ENCODE measurements at regions of chr16 and their contacts with region 1.

Region 1: GRCh38 chr16:84340325-84341040 is 27.9 kb upstream of the ATP2C2 start:
- DNase-seq: peak in 1 of 2 donors; percentile 37
- ATAC-seq: no peak
- H3K4me3 ChIP-seq: no peak overlapping the region
- H3K27ac ChIP-seq: no peak overlapping the region
- H3K4me1 ChIP-seq: no peaks in the 10 kb centered on the region
- H3K27me3 ChIP-seq: peaks cover 0 to 2% (median 0%) of the 10 kb centered on the region in 3 donors
- CTCF ChIP-seq: no peak

Region 2: GRCh38 chr16:83971165-83972130 is 369.0 kb before region 1 on chr16:
- intact Hi-C with region 1: no loop called
- DNase-seq: no peak
- ATAC-seq: no peak
- H3K4me3 ChIP-seq: no peak overlapping the region
- H3K27ac ChIP-seq: no peak overlapping the region
- H3K4me1 ChIP-seq: no peaks in the 10 kb centered on the region
- H3K27me3 ChIP-seq: no peaks in the 10 kb centered on the region
- CTCF ChIP-seq: no peak

Region 3: GRCh38 chr16:84284154-84284722 is 56.2 kb before region 1 on chr16:
- intact Hi-C with region 1: no loop called
- DNase-seq: peak; percentile 54 to 76
- ATAC-seq: peak in 3 of 4 donors; percentile 38 to 70 (median 58)
- H3K4me3 ChIP-seq: no peak overlapping the region
- H3K27ac ChIP-seq: peak overlapping the region; percentile 21
- H3K4me1 ChIP-seq: no peaks in the 10 kb centered on the region
- H3K27me3 ChIP-seq: peaks cover 0 to 17% (median 3%) of the 10 kb centered on the region in 3 donors
- CTCF ChIP-seq: no peak

Region 4: DNA sequence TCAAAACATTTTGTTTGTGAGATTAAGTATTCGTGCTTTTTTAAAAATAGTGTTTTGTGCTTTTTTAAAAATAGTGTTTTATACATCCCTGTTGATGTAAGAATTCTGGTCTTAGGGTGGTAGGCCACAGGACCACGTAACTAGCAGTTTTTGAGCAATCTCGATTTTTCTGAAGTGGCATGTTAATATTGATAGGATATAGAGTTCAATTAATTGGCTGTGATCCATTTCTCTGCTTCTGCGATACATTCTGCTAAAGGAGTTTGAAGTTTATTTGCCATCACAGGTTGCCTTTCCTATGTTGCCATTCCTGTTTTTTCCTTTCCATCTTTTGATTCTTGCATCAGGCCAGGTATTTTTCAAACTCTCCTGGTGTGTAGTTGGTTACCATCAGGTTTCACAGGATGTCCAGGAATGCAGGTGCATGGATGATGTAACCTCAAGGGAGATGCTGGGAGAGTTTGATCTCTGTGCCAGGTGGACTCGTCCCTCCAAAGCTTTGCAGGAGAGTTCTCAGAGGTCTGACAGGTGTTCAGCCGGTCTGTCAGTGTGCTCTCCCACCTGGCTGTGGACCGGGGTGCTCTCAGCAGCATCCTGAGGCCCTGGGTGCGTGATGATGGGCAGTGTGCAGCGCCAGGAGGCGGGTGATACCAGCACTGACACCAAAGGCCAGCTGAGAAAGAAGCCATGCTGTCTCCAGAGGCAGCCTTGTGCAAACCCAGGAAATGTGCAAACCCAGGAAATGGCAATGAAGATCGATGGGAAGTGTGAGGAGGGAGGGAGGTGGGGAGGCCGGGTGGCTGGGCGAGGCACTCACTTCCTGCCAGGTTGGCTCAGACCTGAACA is 29.5 kb after region 1 on chr16:
- intact Hi-C with region 1: loop called in 1 of 2 experiments (anchors 2 kb)
- DNase-seq: no peak
- ATAC-seq: no peak
- H3K4me3 ChIP-seq: no peak overlapping the region
- H3K27ac ChIP-seq: no peak overlapping the region
- H3K4me1 ChIP-seq: no peaks in the 10 kb centered on the region
- H3K27me3 ChIP-seq: peaks cover 0 to 65% (median 15%) of the 10 kb centered on the region in 3 donors
- CTCF ChIP-seq: no peak

Region 5: DNA sequence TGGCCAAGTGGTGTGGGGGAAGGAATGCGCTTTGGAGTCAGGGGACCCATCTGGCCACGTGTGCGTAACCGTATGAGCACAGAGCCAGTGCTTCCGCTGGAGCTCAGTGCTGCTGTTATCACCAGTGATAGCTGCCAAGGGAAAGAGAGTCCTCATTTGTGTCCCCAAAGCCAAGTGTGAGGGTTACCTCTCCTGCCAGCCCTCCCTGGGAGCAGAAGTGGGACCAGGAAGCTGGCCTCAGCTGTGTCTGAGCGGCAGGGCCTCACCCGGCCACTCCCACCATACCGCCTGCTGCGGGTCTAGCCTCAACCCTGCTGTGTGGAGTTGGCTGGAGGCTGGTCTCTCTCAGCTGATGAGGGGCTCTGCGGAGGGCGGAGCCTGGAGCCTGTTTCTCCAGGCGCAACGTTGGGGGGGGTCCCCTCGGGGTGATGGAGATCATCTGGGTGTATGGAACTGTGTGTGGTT is 119.5 kb after region 1 on chr16:
- intact Hi-C with region 1: no loop called
- DNase-seq: no peak
- ATAC-seq: no peak
- H3K4me3 ChIP-seq: no peak overlapping the region
- H3K27ac ChIP-seq: no peak overlapping the region
- H3K4me1 ChIP-seq: no peaks in the 10 kb centered on the region
- H3K27me3 ChIP-seq: no peaks in the 10 kb centered on the region
- CTCF ChIP-seq: no peak

Region 6: GRCh38 chr16:84884596-84885341 is 544.3 kb after region 1 on chr16:
- intact Hi-C with region 1: no loop called
- DNase-seq: peak in 1 of 2 donors; percentile 53
- ATAC-seq: peak in 1 of 4 donors; percentile 22
- H3K4me3 ChIP-seq: no peak overlapping the region
- H3K27ac ChIP-seq: no peak overlapping the region
- H3K4me1 ChIP-seq: no peaks in the 10 kb centered on the region
- H3K27me3 ChIP-seq: no peaks in the 10 kb centered on the region
- CTCF ChIP-seq: no peak